Dendritic cell treated with granulocyte-macrophage colony-stimulating factor and Interleukin-4, amounts not matched to agents 40 ng/mL and 50 ng/mL, for 4 days (primary cell): ENCODE measurements at regions of chr17 and their contacts with region 1.

Region 1: DNA sequence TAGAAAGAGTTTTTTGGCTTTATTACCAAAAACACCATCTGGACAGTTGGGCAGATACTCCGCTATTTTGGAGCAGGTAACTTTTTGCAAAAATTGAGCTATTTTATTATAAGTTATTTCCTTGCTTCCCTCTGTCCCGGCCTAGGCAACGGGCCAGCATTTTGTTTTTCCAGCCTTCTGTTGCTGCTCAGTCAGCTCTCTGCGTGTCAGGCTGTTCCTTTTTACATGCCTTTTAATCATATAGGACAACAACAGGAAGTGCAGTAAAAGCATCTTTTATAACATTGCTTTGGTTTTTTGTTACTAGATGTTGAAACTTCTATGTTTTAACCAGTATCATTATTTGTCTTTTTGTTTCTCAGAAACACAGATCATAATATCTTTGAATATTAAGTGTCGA is 30.4 kb downstream of the PPM1D start:
- H3K4me3 Mint-ChIP-seq: no peak overlapping the region
- H3K27ac Mint-ChIP-seq: no peak overlapping the region
- H3K4me1 Mint-ChIP-seq: no peaks in the 10 kb centered on the region
- H3K27me3 Mint-ChIP-seq: no peaks in the 10 kb centered on the region

Region 2: GRCh38 chr17:60473788-60474187 is 156.6 kb before region 1 on chr17:
- intact Hi-C with region 1: loop called (anchors 10 kb)
- H3K4me3 Mint-ChIP-seq: no peak overlapping the region
- H3K27ac Mint-ChIP-seq: no peak overlapping the region
- H3K4me1 Mint-ChIP-seq: peaks cover 8% of the 10 kb centered on the region
- H3K27me3 Mint-ChIP-seq: no peaks in the 10 kb centered on the region

Region 3: DNA sequence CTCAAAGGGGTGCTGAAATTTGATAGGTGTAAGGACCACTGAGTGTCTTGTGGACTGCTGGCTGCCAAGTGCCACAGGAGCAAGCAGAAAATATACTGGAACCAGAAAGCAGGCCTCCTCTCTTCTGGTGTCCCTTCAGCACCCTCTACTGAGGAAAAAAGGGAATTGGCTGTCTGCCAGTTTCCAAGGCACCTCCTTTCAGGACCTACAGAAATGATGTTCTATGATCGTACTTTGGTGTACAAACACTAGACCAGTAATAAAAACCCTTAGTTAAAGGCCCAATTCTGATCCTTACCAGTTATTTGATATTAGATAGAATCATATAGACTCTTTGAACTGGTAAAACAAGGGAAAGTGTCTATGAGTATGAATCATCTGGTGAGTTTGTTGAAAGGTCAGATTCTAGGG is 11.5 kb after region 1 on chr17:
- intact Hi-C with region 1: no loop called
- H3K4me3 Mint-ChIP-seq: no peak overlapping the region
- H3K27ac Mint-ChIP-seq: no peak overlapping the region
- H3K4me1 Mint-ChIP-seq: peaks cover 18% of the 10 kb centered on the region
- H3K27me3 Mint-ChIP-seq: no peaks in the 10 kb centered on the region